Ascending aorta (tissue), 2 donors: ENCODE measurements at regions of chr1 and their contacts with region 1.

Region 1: GRCh38 chr1:43763497-43763973 is 56.2 kb downstream of the ST3GAL3 start:
- DNase-seq: peak in 1 of 2 donors; percentile 90
- H3K4me3 ChIP-seq: no peak overlapping the region
- H3K27ac ChIP-seq: no peak overlapping the region
- H3K4me1 ChIP-seq: peaks cover 0 to 4% of the 10 kb centered on the region in 2 donors
- H3K27me3 ChIP-seq: no peaks in the 10 kb centered on the region
- CTCF ChIP-seq: peak; percentile 77 to 90 (median 85)

Region 2: DNA sequence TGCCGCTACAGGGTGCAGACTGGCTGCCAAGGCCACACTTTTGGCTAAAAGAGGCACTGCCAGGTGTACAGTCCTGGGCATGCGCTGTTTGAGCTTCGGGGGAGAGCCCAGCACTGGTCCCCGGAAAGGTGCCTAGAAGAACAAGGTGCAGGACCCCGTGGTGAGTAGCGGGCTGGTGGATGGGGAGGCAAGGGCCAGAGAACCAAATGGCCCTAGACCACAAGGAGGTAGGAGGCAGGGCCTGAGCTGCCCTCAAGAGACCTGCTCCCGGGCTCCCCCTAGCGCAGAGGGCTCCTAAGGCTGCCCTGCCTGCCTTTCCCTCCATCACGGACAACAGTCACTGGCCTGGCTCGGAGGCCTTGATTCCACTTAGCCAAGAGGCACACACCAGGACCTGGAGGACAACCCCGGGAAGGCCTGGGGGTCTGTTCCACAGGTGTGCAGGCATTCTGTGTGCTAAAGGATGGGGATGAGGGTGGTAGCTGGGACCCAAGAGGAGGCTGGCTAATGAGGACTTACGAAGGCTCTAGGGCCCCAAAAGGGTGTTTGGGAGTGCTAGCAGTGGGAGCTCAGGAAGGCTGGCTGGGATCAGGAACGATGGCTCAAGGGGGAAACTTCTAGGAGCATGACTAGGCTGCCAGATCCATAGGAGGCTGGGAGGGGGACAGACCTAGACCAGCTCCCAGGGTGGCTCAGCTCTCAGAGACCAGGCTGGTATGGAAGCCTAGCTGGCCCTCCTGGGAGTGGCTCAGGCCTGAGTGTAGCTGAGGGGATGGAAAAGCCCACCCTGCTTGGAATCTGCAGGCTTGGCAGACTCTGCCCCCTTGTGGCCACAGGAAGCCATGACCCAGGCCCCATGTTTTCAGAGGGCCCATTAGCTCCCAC is 170.8 kb after region 1 on chr1:
- intact Hi-C with region 1: loop called (anchors 1 kb)
- DNase-seq: peak in 1 of 2 donors; percentile 73
- H3K4me3 ChIP-seq: peak overlapping the region; percentile 55 to 62
- H3K27ac ChIP-seq: no peak overlapping the region
- H3K4me1 ChIP-seq: peaks cover 8 to 19% of the 10 kb centered on the region in 2 donors
- H3K27me3 ChIP-seq: peaks cover 7% of the 10 kb centered on the region
- CTCF ChIP-seq: peak; percentile 76 to 82 (median 79)

Region 3: GRCh38 chr1:43946236-43947060 is 182.9 kb after region 1 on chr1 and contains the start of gene IPO13:
- intact Hi-C with region 1: loop called (anchors 1 kb)
- DNase-seq: peak; percentile 84 to 97
- H3K4me3 ChIP-seq: peak within 1 kb of the TSS; percentile 81 to 85
- H3K27ac ChIP-seq: peak within 1 kb of the TSS; percentile 89 to 98
- H3K4me1 ChIP-seq: peaks cover 13 to 26% of the 10 kb centered on the region in 2 donors
- H3K27me3 ChIP-seq: no peaks in the 10 kb centered on the region
- CTCF ChIP-seq: peak; percentile 73 to 84 (median 80)
- total RNA-seq, gene IPO13: 6.2 TPM

Region 4: GRCh38 chr1:44036409-44037139 is 273.0 kb after region 1 on chr1:
- intact Hi-C with region 1: loop called (anchors 5 kb)
- DNase-seq: peak in 1 of 2 donors; percentile 86
- H3K4me3 ChIP-seq: no peak overlapping the region
- H3K27ac ChIP-seq: peak overlapping the region; percentile 73 to 83
- H3K4me1 ChIP-seq: peaks cover 17 to 27% of the 10 kb centered on the region in 2 donors
- H3K27me3 ChIP-seq: no peaks in the 10 kb centered on the region
- CTCF ChIP-seq: peak; percentile 73 to 86 (median 84)